ENCODE measurements at regions of chr22 and their contacts with region 1.

Region 1: GRCh38 chr22:41091132-41092022 is 1.0 kb upstream of the EP300 start:
- DNase-seq: peak; percentile 100
- ATAC-seq: peak; percentile 98
- H3K4me3 ChIP-seq: peak overlapping the region; percentile 92
- H3K27ac ChIP-seq: peak overlapping the region; percentile 91
- H3K4me1 ChIP-seq: no peaks in the 10 kb centered on the region
- H3K27me3 ChIP-seq: no peaks in the 10 kb centered on the region

Region 2: DNA sequence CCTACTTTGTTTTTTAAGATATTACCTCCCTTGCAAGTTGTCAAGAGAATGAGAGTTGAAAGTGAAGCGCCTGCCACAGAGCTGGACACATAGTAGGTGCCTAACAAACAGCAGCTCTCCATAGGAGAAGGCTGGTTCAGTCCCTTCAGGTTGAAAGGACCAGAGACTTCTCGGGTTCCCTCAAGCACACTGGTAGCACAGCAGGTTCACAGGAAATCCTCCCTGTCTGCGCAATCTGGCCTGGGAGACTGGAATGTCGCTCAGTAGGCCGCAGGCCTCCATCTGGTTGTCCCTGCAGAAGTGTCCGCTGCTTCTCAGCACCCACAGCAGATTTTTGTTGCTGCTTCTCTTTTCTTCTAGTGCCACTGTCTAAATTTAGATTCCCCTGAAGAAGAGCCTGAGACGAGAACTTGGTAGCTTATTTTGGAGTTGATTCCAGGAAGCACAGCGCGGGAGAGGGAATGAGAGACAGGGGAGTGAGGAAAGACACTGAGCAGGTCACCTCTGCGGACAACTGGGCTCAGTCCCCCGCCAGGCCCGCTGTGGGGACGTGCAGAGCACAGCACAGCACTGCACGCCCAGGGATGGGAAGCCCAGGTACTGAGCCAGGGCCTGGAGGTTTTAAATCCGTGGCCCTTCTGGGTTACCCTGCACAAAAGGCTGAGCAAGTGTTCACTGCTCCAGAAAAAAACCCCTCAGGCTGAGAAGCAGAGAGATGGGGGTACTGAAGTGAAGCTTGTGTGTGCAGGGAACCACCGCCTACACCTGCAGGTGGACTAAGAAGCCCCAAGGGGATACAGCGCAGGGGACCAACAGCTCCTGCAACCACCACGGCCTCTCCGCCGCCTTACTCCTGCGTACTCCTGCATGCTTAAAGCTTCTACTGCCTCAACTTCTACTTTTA is 108.6 kb before region 1 on chr22:
- intact Hi-C with region 1: no loop called
- DNase-seq: no peak
- ATAC-seq: peak; percentile 31 to 42
- H3K4me3 ChIP-seq: no peak overlapping the region
- H3K27ac ChIP-seq: no peak overlapping the region
- H3K4me1 ChIP-seq: no peaks in the 10 kb centered on the region
- H3K27me3 ChIP-seq: no peaks in the 10 kb centered on the region

Region 3: GRCh38 chr22:41022470-41023298 is 68.7 kb before region 1 on chr22:
- intact Hi-C with region 1: loop called in 1 of 4 experiments (anchors 2 kb)
- DNase-seq: peak; percentile 94 to 98 (median 97)
- ATAC-seq: peak; percentile 96
- H3K4me3 ChIP-seq: peak overlapping the region; percentile 90
- H3K27ac ChIP-seq: peak overlapping the region; percentile 94
- H3K4me1 ChIP-seq: no peaks in the 10 kb centered on the region
- H3K27me3 ChIP-seq: no peaks in the 10 kb centered on the region

Region 4: DNA sequence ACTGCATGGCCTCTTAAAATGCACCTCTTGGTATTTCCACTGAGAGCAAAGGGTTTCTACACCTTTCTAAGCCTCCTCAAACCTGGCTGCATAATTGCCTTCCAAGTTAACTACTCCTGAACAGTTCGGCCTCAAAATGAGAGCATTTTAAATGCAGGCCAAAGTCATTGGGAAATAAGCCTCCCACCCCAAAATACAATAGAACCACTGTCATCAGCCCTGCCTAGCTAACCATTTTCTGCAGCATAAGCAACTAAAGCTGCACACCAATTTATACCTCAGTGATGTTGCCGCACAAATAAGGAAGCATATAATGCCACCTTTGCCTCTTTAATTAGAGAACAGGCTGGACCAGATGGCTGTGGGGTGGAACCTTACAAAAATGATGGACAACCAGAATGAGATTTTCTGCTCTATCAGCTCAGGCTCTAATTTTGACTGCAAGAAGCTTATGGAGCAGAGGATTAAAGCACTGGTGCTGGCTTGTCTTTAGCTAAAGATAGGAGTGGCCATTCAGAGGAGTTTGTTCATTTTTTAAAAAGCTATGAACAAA is 350.9 kb after region 1 on chr22:
- intact Hi-C with region 1: no loop called
- DNase-seq: no peak
- ATAC-seq: no peak
- H3K4me3 ChIP-seq: no peak overlapping the region
- H3K27ac ChIP-seq: no peak overlapping the region
- H3K4me1 ChIP-seq: peaks cover 9% of the 10 kb centered on the region
- H3K27me3 ChIP-seq: no peaks in the 10 kb centered on the region

Region 5: DNA sequence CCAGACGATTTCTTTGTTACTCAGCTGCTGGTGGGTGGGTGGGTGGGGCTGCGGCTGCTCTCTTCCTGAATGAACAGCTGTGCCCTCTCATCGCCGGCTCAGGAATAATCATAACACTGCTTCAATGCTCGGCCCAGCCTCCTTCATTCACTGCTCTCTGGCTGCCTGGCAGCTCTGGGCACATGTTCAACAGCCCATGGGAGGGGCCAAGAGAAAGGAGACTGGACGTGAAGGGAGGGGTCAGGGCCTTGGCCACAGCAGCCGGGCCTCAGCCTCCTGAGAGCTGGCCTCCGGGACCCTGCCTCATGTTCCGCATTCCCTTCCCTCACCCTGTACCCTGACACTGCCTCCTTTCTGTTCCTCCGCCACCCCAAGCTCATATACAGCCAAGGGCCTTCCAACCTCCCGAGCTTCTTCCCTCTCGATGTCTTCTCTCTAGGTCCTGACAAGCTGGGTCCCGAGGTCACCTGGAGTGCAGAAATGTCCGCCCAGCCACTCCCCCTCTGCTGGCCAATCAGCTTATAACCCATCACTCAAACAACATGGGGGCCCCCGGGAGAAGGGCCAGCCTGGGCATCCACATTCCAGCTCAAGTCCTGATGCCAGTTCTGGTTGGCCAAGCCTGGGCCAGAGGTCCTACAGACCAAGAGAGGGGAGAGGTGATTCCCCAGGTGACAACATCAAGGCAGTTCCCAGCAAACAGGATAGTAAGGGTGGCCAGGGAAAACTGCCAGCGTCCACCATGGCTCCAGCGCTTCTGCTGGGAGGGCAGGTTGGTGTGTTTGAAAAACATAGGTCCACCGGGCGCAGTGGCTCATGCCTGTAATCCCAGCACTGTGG is 466.2 kb after region 1 on chr22:
- intact Hi-C with region 1: no loop called
- DNase-seq: peak; percentile 89 to 94 (median 94)
- ATAC-seq: peak; percentile 59 to 66
- H3K4me3 ChIP-seq: no peak overlapping the region
- H3K27ac ChIP-seq: peak overlapping the region; percentile 28
- H3K4me1 ChIP-seq: peaks cover 9% of the 10 kb centered on the region
- H3K27me3 ChIP-seq: no peaks in the 10 kb centered on the region